Ascending aorta (tissue), 2 donors: ENCODE measurements at regions of chr6 and their contacts with region 1.

Region 1: DNA sequence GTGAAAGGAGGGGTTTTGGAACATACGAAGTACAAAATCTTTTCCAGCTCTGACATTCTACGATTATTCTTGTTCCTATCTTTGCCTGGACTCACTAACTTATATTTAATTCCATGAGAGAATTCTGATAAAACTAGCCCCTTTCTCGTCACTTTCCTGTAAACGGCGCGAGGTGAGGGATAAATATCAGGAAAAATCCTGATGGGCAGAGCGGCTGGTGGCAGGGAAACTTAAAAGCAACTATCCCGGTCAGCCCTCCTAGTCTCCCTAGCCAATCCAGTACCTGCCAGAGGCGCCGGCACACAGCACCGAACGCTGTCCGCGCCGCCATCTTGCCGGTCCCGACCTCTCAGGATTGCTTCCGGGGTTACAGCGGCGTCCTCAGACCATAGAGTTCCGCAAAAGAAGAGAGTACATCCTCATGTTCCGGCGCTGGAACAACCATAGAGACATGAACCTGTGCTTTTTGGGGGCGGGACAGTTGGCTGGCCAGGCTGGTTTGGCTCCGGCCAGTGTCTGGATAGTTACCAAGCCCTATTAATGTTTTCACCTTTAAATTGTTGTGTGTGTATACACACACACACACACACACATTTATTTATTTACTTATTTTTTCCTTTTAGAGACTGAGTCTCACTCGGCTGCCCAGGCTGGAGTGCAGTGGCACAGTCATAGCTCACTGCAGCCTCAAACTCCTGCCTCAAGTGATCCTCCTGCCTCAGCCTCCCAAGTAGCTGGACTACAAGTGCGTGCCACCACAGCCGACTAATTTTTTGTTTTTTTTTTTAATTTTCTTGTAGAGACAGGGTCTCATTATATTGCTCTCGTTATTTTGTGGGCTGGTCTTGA is at the start of gene MRPS10:
- DNase-seq: peak; percentile 66 to 96
- H3K4me3 ChIP-seq: peak within 1 kb of the TSS; percentile 59 to 80
- H3K27ac ChIP-seq: peak within 1 kb of the TSS; percentile 61 to 72
- H3K4me1 ChIP-seq: peaks cover 3 to 4% of the 10 kb centered on the region in 2 donors
- H3K27me3 ChIP-seq: no peaks in the 10 kb centered on the region
- CTCF ChIP-seq: no peak
- total RNA-seq, gene MRPS10: 5.4 TPM

Region 2: GRCh38 chr6:41920921-41921711 is 296.6 kb before region 1 on chr6 and contains the starts of genes BYSL and MED20:
- intact Hi-C with region 1: loop called (anchors 1 kb)
- DNase-seq: peak; percentile 69 to 95
- H3K4me3 ChIP-seq: peak within 1 kb of the TSS; percentile 92 to 97
- H3K27ac ChIP-seq: peak within 1 kb of the TSS; percentile 98 to 99
- H3K4me1 ChIP-seq: peaks cover 8 to 19% of the 10 kb centered on the region in 2 donors
- H3K27me3 ChIP-seq: no peaks in the 10 kb centered on the region
- CTCF ChIP-seq: peak; percentile 94 to 97 (median 96)
- total RNA-seq, gene BYSL: 1.6 TPM
- total RNA-seq, gene MED20: 13.5 TPM

Region 3: DNA sequence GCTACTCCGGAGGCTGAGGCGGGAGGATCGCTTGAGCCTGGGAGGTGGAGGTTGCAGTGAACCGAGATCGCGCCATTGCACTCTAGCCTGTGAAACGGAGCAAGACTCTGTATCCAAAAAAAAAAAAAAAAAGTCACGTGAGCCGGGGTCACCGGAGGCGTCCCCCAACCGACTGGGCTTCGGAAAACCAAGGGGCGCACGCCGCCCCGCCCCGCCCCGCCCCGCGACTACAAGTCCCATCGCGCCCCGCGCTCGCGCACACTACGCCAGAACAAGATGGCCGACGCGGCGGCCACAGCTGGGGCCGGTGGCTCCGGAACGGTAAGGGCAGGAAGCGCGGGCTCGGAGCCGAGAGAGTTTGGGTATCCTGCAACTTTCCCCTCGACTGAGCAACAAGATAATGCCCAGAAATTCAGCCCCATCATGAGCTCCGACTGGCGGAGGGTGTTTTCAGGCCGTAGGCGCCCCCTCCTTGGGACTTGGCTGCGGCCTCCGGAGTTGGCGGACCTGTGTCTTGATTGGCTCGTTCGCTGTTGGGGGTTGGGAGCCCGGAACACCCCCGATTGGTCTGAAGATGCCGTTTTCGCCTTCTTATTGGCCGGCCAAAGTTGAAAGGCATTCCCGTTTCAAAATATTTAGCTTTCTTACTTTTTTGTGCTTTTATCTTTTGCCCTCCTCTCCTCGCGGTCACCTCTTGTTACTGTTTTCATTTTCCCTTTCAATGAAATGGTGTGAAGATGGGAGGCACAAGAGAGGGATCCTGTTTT is 167.3 kb before region 1 on chr6 and contains the start of gene TAF8:
- intact Hi-C with region 1: loop called (anchors 2 kb)
- DNase-seq: peak; percentile 66 to 94
- H3K4me3 ChIP-seq: peak within 1 kb of the TSS; percentile 71 to 88
- H3K27ac ChIP-seq: peak within 1 kb of the TSS; percentile 83 to 95
- H3K4me1 ChIP-seq: peaks cover 15 to 26% of the 10 kb centered on the region in 2 donors
- H3K27me3 ChIP-seq: no peaks in the 10 kb centered on the region
- CTCF ChIP-seq: no peak
- total RNA-seq, gene TAF8: 26.0 TPM